ENCODE measurements at regions of chr12 and their contacts with region 1.

Region 1: DNA sequence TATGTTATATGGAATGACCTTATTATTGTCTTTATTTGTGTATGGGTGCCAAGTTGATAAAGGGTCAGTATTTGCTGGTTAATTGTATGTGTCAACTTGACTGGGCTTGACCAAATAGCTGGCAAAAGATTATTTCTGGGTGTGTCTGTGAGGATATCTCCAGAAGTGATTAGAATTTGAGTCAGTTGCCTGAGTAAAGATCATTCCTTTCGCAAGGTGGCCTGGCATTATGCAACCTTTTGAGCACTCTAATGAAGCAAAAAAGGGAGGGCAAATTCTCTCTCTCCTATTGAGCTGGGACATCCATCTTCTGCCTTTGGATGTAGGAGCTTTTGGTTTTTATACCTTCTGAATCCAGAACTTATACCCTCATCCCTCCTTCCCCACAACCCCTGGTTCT is 82.3 kb downstream of the ATXN7L3B start:
- DNase-seq: no peak
- H3K4me3 ChIP-seq: no peak overlapping the region
- H3K27ac ChIP-seq: no peak overlapping the region
- H3K4me1 ChIP-seq: no peaks in the 10 kb centered on the region
- H3K27me3 ChIP-seq: no peaks in the 10 kb centered on the region
- CTCF ChIP-seq: no peak
- EP300 ChIP-seq: no peak
- POLR2A ChIP-seq: no peak

Region 2: DNA sequence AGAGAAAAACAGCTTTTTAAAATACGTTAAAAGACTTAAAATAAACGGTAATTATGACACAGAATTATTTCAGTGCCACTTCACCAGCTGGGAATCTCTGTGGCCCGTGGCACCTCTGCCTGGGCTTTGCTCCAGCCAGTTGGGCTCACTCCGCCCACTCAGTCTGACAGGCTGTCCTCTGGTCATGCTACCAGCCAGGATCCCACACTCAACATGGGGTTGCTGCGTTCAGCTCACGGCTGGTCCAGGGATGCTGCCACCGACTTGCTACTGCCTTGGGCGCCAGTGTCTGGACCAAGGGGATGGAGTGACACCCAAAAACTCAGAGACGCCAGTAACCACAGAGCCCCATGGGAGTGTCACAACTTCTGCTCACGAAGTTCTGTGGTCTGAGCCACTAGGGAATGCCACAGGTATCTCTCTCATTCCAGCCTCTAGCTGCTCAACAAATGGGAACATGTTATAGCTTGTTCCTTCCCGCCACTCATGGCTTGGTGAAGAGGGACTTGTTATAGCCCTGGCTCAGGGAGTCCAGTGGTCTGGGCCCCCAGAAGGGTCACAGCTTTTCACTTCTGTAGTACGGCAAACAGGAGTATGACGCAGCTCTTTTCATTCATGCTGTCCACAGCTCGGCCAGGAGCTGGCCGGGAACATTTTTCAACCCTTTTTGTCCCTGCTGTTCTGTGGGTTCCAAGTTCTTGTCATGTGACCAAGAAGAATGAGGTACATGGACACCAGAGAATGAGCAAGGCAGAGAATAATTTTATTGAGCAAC is 105.6 kb before region 1 on chr12:
- in situ Hi-C with region 1: no loop called
- intact Hi-C with region 1: no loop called
- DNase-seq: no peak
- H3K4me3 ChIP-seq: no peak overlapping the region
- H3K27ac ChIP-seq: no peak overlapping the region
- H3K4me1 ChIP-seq: no peaks in the 10 kb centered on the region
- H3K27me3 ChIP-seq: no peaks in the 10 kb centered on the region
- CTCF ChIP-seq: no peak
- EP300 ChIP-seq: no peak
- POLR2A ChIP-seq: no peak

Region 3: GRCh38 chr12:74671421-74671820 is 51.5 kb after region 1 on chr12:
- in situ Hi-C with region 1: no loop called
- intact Hi-C with region 1: loop called (anchors 2 kb)
- DNase-seq: no peak
- H3K4me3 ChIP-seq: no peak overlapping the region
- H3K27ac ChIP-seq: no peak overlapping the region
- H3K4me1 ChIP-seq: no peaks in the 10 kb centered on the region
- H3K27me3 ChIP-seq: no peaks in the 10 kb centered on the region
- CTCF ChIP-seq: no peak
- EP300 ChIP-seq: no peak
- POLR2A ChIP-seq: no peak

Measured in transverse colon (tissue), 4 donors.